GM12878 (cell line): ENCODE measurements at regions of chr4 and their contacts with region 1.

Region 1: GRCh38 chr4:39025552-39026085 is 6.6 kb downstream of the TMEM156 start:
- DNase-seq: no peak
- ATAC-seq: no peak
- H3K4me3 ChIP-seq: no peak overlapping the region
- H3K27ac ChIP-seq: no peak overlapping the region
- H3K4me1 ChIP-seq: peaks cover 8% of the 10 kb centered on the region
- H3K27me3 ChIP-seq: no peaks in the 10 kb centered on the region
- CTCF ChIP-seq: no peak
- EP300 ChIP-seq: no peak
- POLR2A ChIP-seq: no peak
- RAD21 ChIP-seq: no peak

Region 2: GRCh38 chr4:39037491-39037825 is 11.8 kb after region 1 on chr4:
- CTCF ChIA-PET with region 1: interaction called, 90 read pairs
- POLR2A ChIA-PET with region 1: interaction called, 131 read pairs
- RAD21 ChIA-PET with region 1: interaction called, 164 read pairs
- SMC1A ChIA-PET with region 1: interaction called, 163 read pairs
- in situ Hi-C with region 1: no loop called
- intact Hi-C with region 1: no loop called
- DNase-seq: no peak
- ATAC-seq: peak; percentile 68
- H3K4me3 ChIP-seq: no peak overlapping the region
- H3K27ac ChIP-seq: peak overlapping the region; percentile 53
- H3K4me1 ChIP-seq: peaks cover 31% of the 10 kb centered on the region
- H3K27me3 ChIP-seq: no peaks in the 10 kb centered on the region
- CTCF ChIP-seq: no peak
- EP300 ChIP-seq: no peak
- POLR2A ChIP-seq: 0 out of 2 replicates have a peak, but pooled peaks have one; percentile 14
- RAD21 ChIP-seq: no peak

Region 3: GRCh38 chr4:39834269-39834668 is 808.6 kb after region 1 on chr4:
- CTCF ChIA-PET with region 1: no interaction called
- POLR2A ChIA-PET with region 1: no interaction called
- RAD21 ChIA-PET with region 1: no interaction called
- SMC1A ChIA-PET with region 1: no interaction called
- in situ Hi-C with region 1: no loop called
- intact Hi-C with region 1: no loop called
- DNase-seq: no peak
- ATAC-seq: no peak
- H3K4me3 ChIP-seq: no peak overlapping the region
- H3K27ac ChIP-seq: no peak overlapping the region
- H3K4me1 ChIP-seq: no peaks in the 10 kb centered on the region
- H3K27me3 ChIP-seq: no peaks in the 10 kb centered on the region
- CTCF ChIP-seq: no peak
- EP300 ChIP-seq: no peak
- POLR2A ChIP-seq: no peak
- RAD21 ChIP-seq: no peak